Keratinocyte (primary cell): ENCODE measurements at regions of chr16 and their contacts with region 1.

Region 1: GRCh38 chr16:19521471-19522396 is at the start of gene GDE1:
- DNase-seq: peak; percentile 30
- H3K4me3 ChIP-seq: peak within 1 kb of the TSS; percentile 63 to 98 (median 81)
- H3K27ac ChIP-seq: peak within 1 kb of the TSS; percentile 61
- H3K4me1 ChIP-seq: peaks cover 38% of the 10 kb centered on the region
- H3K27me3 ChIP-seq: no peaks in the 10 kb centered on the region
- CTCF ChIP-seq: peak; percentile 19 to 58 (median 51)
- polyA plus RNA-seq, gene GDE1: 33.9 to 70.5 TPM (median 52.9 TPM) in 3 replicates

Region 2: GRCh38 chr16:19338335-19338734 is 183.4 kb before region 1 on chr16:
- dilution Hi-C with region 1: no loop called
- DNase-seq: no peak
- H3K4me3 ChIP-seq: no peak overlapping the region
- H3K27ac ChIP-seq: no peak overlapping the region
- H3K4me1 ChIP-seq: no peaks in the 10 kb centered on the region
- H3K27me3 ChIP-seq: no peaks in the 10 kb centered on the region
- CTCF ChIP-seq: no peak

Region 3: GRCh38 chr16:19410435-19411161 is 111.1 kb before region 1 on chr16:
- dilution Hi-C with region 1: loop called (anchors 25 kb)
- DNase-seq: no peak
- H3K4me3 ChIP-seq: peak overlapping the region; percentile 42 to 63 (median 58)
- H3K27ac ChIP-seq: no peak overlapping the region
- H3K4me1 ChIP-seq: peaks cover 13% of the 10 kb centered on the region
- H3K27me3 ChIP-seq: peaks cover 7% of the 10 kb centered on the region
- CTCF ChIP-seq: peak in 2 of 3 experiments; percentile 20 to 35

Region 4: DNA sequence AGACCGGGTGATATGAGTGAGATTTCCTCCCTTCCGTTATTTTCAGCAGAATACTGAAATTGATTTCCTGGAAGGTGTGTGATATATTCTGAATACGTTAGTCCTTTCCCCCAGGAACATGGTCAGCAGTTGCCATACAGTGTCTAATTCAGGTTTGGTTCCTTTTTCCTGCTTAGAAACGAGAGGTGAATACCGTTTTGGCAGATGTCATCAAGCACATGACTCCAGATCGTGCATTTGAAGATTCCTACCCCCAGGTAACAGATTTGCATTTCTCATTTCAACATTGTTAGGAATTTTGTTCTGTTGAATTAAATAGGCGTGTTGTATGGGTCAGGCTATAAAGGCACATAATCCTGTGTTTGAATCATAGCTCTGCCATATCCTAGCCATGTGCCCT is 111.2 kb after region 1 on chr16:
- dilution Hi-C with region 1: no loop called
- DNase-seq: no peak
- H3K4me3 ChIP-seq: no peak overlapping the region
- H3K27ac ChIP-seq: no peak overlapping the region
- H3K4me1 ChIP-seq: no peaks in the 10 kb centered on the region
- H3K27me3 ChIP-seq: no peaks in the 10 kb centered on the region
- CTCF ChIP-seq: no peak

Region 5: DNA sequence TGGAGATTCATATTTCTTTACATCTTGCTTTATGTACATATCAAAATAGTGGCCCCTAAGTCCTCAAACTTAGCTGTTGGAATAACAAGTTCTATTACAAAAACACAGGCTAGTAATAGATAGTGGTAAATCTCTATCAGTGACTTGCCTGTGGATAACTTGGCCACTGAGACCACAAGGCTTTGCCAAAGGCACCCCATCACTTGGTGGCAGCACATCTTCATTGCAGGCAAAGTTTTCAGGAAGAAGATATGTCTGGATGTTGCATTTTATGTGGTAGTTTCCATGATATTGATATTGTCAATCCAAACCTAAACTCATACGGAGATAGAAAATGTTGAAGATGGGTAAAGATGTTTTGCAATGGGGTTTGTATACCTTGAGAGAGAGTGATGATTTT is 137.8 kb after region 1 on chr16:
- dilution Hi-C with region 1: no loop called
- DNase-seq: no peak
- H3K4me3 ChIP-seq: no peak overlapping the region
- H3K27ac ChIP-seq: no peak overlapping the region
- H3K4me1 ChIP-seq: no peaks in the 10 kb centered on the region
- H3K27me3 ChIP-seq: no peaks in the 10 kb centered on the region
- CTCF ChIP-seq: peak in 1 of 3 experiments; percentile 14